B cell (primary cell): ENCODE measurements at regions of chr7 and their contacts with region 1.

Region 1: DNA sequence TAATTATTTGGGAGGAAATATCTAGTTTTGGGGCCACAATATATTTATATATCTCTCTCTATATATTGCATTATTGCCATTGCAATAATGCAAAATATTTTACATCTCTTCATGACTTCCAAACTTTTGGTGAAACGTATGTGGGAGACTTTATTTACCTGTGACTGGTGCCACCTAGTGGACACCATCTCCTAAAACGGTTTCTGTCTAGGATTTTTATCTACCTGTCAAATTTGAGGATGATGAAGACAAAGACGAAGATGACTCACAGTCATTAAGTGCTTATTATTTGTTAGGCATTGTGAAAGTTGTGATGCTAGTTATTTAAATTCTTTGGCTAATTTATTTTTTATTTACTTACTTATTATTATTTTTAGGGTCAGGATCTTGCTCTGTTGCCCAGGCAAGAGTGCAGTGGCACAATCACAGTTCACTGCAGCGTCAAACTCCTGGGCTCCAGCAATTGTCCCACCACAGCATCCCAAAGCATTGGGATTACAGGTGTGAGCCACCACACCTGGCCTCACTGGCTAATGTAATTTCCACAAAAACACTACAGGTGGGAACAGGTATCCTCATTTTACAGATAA is 18.7 kb upstream of the CBLL1 start:
- DNase-seq: peak; percentile 76
- ATAC-seq: peak; percentile 31
- H3K4me3 ChIP-seq: no peak overlapping the region
- H3K4me3 Mint-ChIP-seq: no peak overlapping the region
- H3K27ac ChIP-seq: no peak overlapping the region
- H3K27ac Mint-ChIP-seq: no peak overlapping the region
- H3K4me1 ChIP-seq: no peaks in the 10 kb centered on the region
- H3K4me1 Mint-ChIP-seq: no peaks in the 10 kb centered on the region
- H3K27me3 ChIP-seq: peaks cover 0 to 6% (median 1%) of the 10 kb centered on the region in 4 experiments
- H3K27me3 Mint-ChIP-seq: peaks cover 23% of the 10 kb centered on the region
- CTCF ChIP-seq: peak; percentile 87

Region 2: GRCh38 chr7:107150375-107151073 is 574.7 kb before region 1 on chr7:
- CTCF ChIA-PET with region 1: interaction called, 5 read pairs
- POLR2A ChIA-PET with region 1: no interaction called
- intact Hi-C with region 1: loop called (anchors 1 kb)
- DNase-seq: peak; percentile 83
- ATAC-seq: peak; percentile 79
- H3K4me3 ChIP-seq: no peak overlapping the region
- H3K4me3 Mint-ChIP-seq: no peak overlapping the region
- H3K27ac ChIP-seq: no peak overlapping the region
- H3K27ac Mint-ChIP-seq: no peak overlapping the region
- H3K4me1 ChIP-seq: no peaks in the 10 kb centered on the region
- H3K4me1 Mint-ChIP-seq: peaks cover 4% of the 10 kb centered on the region
- H3K27me3 ChIP-seq: no peaks in the 10 kb centered on the region
- H3K27me3 Mint-ChIP-seq: no peaks in the 10 kb centered on the region
- CTCF ChIP-seq: peak; percentile 86

Region 3: DNA sequence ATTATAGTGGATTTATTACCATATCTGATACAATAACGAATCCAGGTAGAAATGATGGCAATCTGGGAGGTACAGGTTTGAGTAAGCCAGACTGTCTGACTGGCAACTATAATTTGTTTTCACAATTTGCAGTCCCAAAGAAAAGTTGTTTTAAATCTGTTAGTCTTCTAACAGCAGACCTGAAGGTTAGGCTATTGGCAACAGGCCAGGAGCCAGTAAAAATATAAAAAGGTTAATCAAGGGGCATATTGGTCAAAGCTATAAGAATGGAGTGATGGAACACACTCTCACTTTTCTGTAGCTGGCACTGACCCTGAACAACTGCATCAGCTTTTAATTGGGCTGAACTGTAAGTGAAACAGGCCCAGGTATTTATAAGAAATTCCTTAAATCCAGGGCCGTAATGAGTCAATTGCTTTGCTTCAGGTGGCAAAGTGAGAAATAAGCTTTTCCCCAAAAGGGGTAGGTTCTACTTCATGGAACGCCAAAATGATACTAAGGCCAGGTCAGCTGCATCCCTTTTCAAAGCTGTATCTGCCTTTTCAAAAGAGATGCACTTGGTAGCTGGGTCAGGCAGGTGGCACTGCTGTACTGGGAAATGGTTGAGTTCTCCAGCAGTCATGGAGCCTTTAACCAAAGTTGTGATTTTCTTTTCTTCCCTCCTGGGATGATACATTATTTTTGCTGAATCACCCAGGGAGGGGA is 262.4 kb before region 1 on chr7:
- CTCF ChIA-PET with region 1: interaction called, 133 read pairs
- POLR2A ChIA-PET with region 1: no interaction called
- intact Hi-C with region 1: loop called (anchors 1 kb)
- DNase-seq: peak; percentile 67
- ATAC-seq: peak; percentile 72
- H3K4me3 ChIP-seq: no peak overlapping the region
- H3K4me3 Mint-ChIP-seq: no peak overlapping the region
- H3K27ac ChIP-seq: no peak overlapping the region
- H3K27ac Mint-ChIP-seq: no peak overlapping the region
- H3K4me1 ChIP-seq: no peaks in the 10 kb centered on the region
- H3K4me1 Mint-ChIP-seq: no peaks in the 10 kb centered on the region
- H3K27me3 ChIP-seq: no peaks in the 10 kb centered on the region
- H3K27me3 Mint-ChIP-seq: no peaks in the 10 kb centered on the region
- CTCF ChIP-seq: peak; percentile 79

Region 4: DNA sequence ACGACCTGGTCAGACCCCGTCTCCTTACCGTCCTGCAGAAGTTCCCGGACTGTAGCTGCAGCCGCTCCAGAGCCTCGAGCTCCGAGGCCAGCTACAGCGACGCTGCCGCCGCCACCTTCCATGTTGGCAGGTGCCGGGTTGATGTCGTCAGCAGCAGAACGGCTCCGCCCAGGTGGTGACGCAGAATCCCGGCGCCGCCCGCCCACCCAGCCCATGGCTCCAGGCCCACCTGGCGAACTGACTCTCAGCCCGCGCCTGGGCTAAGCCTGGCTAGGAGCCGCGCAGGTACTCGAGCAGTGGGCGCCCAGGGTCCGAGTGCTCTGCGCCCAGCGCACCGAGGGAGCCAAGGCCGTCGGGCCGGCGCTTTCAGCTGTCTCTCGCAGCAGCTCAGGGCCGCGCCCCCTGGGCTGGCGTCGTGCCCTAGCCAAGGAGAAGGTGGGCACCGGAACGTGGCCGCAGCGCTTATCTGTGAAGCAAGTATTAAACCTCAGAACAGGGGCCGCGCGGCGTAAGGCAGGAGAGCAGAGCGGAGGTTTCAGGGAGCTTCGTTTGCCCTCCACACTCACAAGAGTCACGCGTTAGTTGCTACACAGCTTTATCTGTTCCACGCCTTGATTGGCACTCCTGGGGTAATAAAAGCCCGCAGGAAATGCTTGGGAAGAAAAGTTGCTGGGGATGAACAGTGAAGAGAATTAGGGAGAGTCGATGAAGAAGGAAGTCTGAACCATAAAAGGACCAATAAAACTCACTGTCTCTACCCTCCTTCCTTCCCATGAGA is 161.3 kb before region 1 on chr7 and contains the starts of genes COG5 and DUS4L:
- CTCF ChIA-PET with region 1: interaction called, 4 read pairs
- POLR2A ChIA-PET with region 1: no interaction called
- intact Hi-C with region 1: loop called (anchors 1 kb)
- DNase-seq: peak; percentile 92
- ATAC-seq: peak; percentile 93
- H3K4me3 ChIP-seq: peak within 1 kb of the TSS; percentile 86 to 98 (median 93)
- H3K4me3 Mint-ChIP-seq: peak within 1 kb of the TSS; percentile 88
- H3K27ac ChIP-seq: peak within 1 kb of the TSS; percentile 88 to 94
- H3K27ac Mint-ChIP-seq: peak within 1 kb of the TSS; percentile 94
- H3K4me1 ChIP-seq: peaks cover 18 to 23% of the 10 kb centered on the region in 2 donors
- H3K4me1 Mint-ChIP-seq: peaks cover 50% of the 10 kb centered on the region
- H3K27me3 ChIP-seq: no peaks in the 10 kb centered on the region
- H3K27me3 Mint-ChIP-seq: no peaks in the 10 kb centered on the region
- CTCF ChIP-seq: no peak
- total RNA-seq, gene COG5: 73.0 and 74.8 TPM in 2 replicates
- total RNA-seq, gene DUS4L: 17.6 and 18.7 TPM in 2 replicates

Region 5: DNA sequence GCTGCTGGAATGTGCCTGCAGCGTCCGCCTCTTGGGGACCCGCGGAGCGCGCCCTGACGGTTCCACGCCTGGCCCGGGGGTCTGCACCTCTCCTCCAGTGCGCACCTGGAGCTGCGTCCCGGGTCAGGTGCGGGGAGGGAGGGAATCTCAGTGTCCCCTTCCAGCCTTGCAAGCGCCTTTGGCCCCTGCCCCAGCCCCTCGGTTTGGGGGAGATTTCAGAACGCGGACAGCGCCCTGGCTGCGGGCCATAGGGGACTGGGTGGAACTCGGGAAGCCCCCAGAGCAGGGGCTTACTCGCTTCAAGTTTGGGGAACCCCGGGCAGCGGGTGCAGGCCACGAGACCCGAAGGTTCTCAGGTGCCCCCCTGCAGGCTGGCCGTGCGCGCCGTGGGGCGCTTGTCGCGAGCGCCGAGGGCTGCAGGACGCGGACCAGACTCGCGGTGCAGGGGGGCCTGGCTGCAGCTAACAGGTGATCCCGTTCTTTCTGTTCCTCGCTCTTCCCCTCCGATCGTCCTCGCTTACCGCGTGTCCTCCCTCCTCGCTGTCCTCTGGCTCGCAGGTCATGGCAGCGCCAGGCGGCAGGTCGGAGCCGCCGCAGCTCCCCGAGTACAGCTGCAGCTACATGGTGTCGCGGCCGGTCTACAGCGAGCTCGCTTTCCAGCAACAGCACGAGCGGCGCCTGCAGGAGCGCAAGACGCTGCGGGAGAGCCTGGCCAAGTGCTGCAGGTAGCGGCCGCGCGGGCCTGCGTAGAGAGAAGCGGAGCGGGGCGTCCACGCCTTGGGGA is 64.0 kb before region 1 on chr7:
- CTCF ChIA-PET with region 1: interaction called, 6 read pairs
- POLR2A ChIA-PET with region 1: no interaction called
- intact Hi-C with region 1: loop called (anchors 5 kb)
- DNase-seq: peak; percentile 73
- ATAC-seq: peak; percentile 60
- H3K4me3 ChIP-seq: peak overlapping the region; percentile 41 to 72 (median 61)
- H3K4me3 Mint-ChIP-seq: peak overlapping the region; percentile 99
- H3K27ac ChIP-seq: no peak overlapping the region
- H3K27ac Mint-ChIP-seq: peak overlapping the region; percentile 72
- H3K4me1 ChIP-seq: peaks cover 25 to 26% of the 10 kb centered on the region in 2 donors
- H3K4me1 Mint-ChIP-seq: peaks cover 26% of the 10 kb centered on the region
- H3K27me3 ChIP-seq: peaks cover 0 to 28% (median 16%) of the 10 kb centered on the region in 4 experiments
- H3K27me3 Mint-ChIP-seq: peaks cover 30% of the 10 kb centered on the region
- CTCF ChIP-seq: no peak

Region 6: DNA sequence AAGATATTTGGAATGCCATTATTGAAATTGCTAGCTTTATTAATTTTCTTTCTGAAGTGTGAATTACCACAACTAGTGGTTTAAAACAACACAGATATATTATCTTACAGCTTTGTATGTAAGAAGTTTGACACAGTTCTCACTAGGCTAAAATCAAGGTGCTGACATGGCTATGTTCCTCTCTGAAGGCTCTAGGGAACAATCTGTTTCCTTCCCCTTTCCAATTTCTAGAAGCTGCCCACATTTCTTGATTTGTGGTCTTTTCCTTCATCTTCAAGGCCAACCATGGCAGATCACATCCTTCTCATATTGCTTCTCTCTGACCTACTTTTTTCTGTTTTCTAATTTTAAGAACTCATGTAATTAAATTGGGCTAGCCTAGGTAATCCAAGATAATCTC is 121.1 kb after region 1 on chr7:
- CTCF ChIA-PET with region 1: no interaction called
- POLR2A ChIA-PET with region 1: no interaction called
- intact Hi-C with region 1: no loop called
- DNase-seq: no peak
- ATAC-seq: no peak
- H3K4me3 ChIP-seq: no peak overlapping the region
- H3K4me3 Mint-ChIP-seq: no peak overlapping the region
- H3K27ac ChIP-seq: no peak overlapping the region
- H3K27ac Mint-ChIP-seq: no peak overlapping the region
- H3K4me1 ChIP-seq: no peaks in the 10 kb centered on the region
- H3K4me1 Mint-ChIP-seq: no peaks in the 10 kb centered on the region
- H3K27me3 ChIP-seq: no peaks in the 10 kb centered on the region
- H3K27me3 Mint-ChIP-seq: peaks cover 6% of the 10 kb centered on the region
- CTCF ChIP-seq: no peak

Region 7: GRCh38 chr7:107879400-107880035 is 154.3 kb after region 1 on chr7:
- CTCF ChIA-PET with region 1: interaction called, 6 read pairs
- POLR2A ChIA-PET with region 1: no interaction called
- intact Hi-C with region 1: loop called (anchors 2 kb)
- DNase-seq: peak; percentile 52
- ATAC-seq: peak; percentile 58
- H3K4me3 ChIP-seq: no peak overlapping the region
- H3K4me3 Mint-ChIP-seq: no peak overlapping the region
- H3K27ac ChIP-seq: no peak overlapping the region
- H3K27ac Mint-ChIP-seq: no peak overlapping the region
- H3K4me1 ChIP-seq: no peaks in the 10 kb centered on the region
- H3K4me1 Mint-ChIP-seq: peaks cover 3% of the 10 kb centered on the region
- H3K27me3 ChIP-seq: peaks cover 0 to 14% (median 3%) of the 10 kb centered on the region in 4 experiments
- H3K27me3 Mint-ChIP-seq: peaks cover 42% of the 10 kb centered on the region
- CTCF ChIP-seq: peak; percentile 87